ENCODE measurements at regions of chr9 and their contacts with region 1.

Region 1: GRCh38 chr9:12253941-12254340 is 439.2 kb upstream of the TYRP1 start:
- DNase-seq: no peak
- ATAC-seq: no peak
- H3K4me3 ChIP-seq: no peak overlapping the region
- H3K27ac ChIP-seq: no peak overlapping the region
- H3K4me1 ChIP-seq: no peaks in the 10 kb centered on the region
- H3K27me3 ChIP-seq: no peaks in the 10 kb centered on the region
- CTCF ChIP-seq: no peak

Region 2: DNA sequence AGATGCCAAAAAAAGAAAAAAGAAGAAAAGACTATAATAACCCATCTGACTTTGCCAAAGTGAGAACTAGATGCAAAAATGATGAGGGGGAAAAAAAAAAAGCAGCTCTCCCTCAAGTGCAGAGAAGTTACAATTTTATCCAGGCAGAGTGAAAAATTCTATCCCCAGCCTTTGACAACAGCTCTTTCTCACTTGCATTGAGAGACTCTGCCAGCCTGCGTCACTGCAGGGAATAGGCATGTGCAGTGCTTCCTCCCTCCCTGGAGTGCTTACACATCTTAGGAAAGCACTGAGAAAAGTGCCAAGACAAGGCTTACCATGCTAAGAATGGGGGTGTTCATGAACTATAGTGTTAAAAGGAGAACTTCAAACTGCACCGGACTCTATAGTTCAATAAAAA is 20.6 kb after region 1 on chr9:
- intact Hi-C with region 1: loop called in 1 of 2 experiments (anchors 1 kb)
- DNase-seq: peak in 1 of 2 donors; percentile 10
- ATAC-seq: no peak
- H3K4me3 ChIP-seq: no peak overlapping the region
- H3K27ac ChIP-seq: no peak overlapping the region
- H3K4me1 ChIP-seq: no peaks in the 10 kb centered on the region
- H3K27me3 ChIP-seq: no peaks in the 10 kb centered on the region
- CTCF ChIP-seq: no peak

Region 3: DNA sequence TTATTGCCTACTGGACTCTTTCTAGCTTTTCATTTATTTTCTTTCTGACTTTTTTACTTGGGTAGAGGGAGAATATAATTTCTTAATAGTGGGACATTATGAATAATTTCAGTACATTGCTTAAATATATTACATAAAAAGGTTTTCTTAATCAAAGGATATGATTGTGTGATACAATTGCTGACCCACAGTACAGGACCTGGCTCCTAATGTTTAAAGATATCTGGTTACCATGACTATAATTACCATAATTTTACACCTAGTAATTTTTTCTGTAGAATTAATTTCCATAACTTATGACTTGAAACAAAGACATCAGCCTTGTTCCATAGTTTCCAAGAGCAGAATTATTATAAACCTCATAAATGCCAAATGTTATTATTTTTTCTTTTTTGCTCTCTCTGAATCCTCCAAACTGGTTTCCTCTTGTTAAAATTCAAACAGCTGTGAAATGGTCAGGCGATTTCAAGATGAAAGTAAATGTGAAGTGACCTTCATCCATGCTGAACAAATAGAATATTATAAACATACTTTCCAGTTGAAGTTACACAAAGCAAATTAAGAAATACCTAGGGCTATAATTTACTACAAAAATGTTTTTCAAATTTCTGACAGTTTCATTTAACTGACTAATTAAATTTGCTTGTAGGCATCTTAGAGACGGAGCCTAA is 138.0 kb after region 1 on chr9:
- intact Hi-C with region 1: no loop called
- DNase-seq: no peak
- ATAC-seq: no peak
- H3K4me3 ChIP-seq: no peak overlapping the region
- H3K27ac ChIP-seq: no peak overlapping the region
- H3K4me1 ChIP-seq: no peaks in the 10 kb centered on the region
- H3K27me3 ChIP-seq: no peaks in the 10 kb centered on the region
- CTCF ChIP-seq: no peak